ENCODE measurements at regions of chr1 and their contacts with region 1.

Region 1: GRCh38 chr1:158045639-158046038 is 52.2 kb downstream of the KIRREL1 start:
- DNase-seq: no peak
- H3K4me3 ChIP-seq: no peak overlapping the region
- H3K27ac ChIP-seq: no peak overlapping the region
- H3K4me1 ChIP-seq: no peaks in the 10 kb centered on the region
- H3K27me3 ChIP-seq: no peaks in the 10 kb centered on the region

Region 2: GRCh38 chr1:158055854-158056253 is 10.2 kb after region 1 on chr1:
- CTCF ChIA-PET with region 1: interaction called, 12 read pairs
- POLR2A ChIA-PET with region 1: no interaction called
- DNase-seq: peak; percentile 63 to 98 (median 95)
- H3K4me3 ChIP-seq: peak overlapping the region in 2 of 7 experiments; percentile 5 to 18
- H3K27ac ChIP-seq: no peak overlapping the region
- H3K4me1 ChIP-seq: peaks cover 0 to 31% (median 30%) of the 10 kb centered on the region in 4 experiments
- H3K27me3 ChIP-seq: no peaks in the 10 kb centered on the region